GM12878 (cell line): ENCODE measurements at regions of chr6 and their contacts with region 1.

Region 1: GRCh38 chr6:12060780-12061619 is 48.9 kb downstream of the HIVEP1 start:
- DNase-seq: peak; percentile 87
- ATAC-seq: peak; percentile 82
- H3K4me3 ChIP-seq: peak overlapping the region; percentile 57; the same call in 1 of the 2 replicates
- H3K27ac ChIP-seq: peak overlapping the region; percentile 85
- H3K4me1 ChIP-seq: peaks cover 44% of the 10 kb centered on the region
- H3K27me3 ChIP-seq: no peaks in the 10 kb centered on the region
- CTCF ChIP-seq: no peak
- EP300 ChIP-seq: peak; percentile 94
- POLR2A ChIP-seq: peak; percentile 70
- RAD21 ChIP-seq: no peak

Region 2: DNA sequence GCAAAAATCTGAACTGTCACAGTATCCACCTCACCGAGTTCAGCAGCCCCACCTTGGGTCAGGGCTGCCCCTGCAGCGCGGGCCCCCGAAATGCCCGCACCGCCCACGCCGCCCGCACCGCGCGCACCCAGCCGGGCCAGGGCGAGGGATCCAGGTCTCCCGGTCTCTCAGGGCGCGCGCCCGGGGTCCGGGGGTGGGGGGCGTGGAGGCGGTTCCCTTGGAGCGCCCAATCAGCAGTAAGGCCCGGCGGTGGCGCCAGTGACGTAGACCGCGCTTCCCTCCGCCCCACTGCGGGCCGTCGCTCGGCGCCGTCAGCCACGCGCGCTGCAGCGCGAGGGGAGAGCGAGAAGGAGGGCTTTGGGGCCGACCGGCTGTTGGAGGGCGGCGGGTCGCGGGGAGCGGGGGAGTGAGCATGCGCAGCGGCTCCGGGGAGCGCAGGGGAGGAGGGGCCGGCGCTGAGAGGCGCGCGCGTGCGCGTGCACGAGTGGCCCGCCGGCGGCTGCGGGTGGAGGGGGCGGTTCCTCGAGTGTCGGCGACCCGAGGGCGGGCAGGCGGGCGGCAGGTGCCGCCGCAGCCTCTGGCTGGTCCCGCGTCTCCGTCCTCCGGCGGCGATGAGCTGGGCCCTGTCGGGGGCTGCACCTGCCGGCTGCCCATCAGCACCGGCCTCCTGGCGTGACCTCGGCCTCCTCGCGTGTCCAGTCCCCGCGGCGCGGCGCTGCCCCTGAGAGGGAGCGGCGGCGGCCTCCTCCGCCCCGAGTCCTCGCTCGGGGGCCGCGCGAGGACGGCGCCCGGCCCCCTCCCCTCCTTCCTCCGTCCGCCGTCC is 523.6 kb before region 1 on chr6 and contains the start of gene TMEM170B:
- CTCF ChIA-PET with region 1: no interaction called
- POLR2A ChIA-PET with region 1: no interaction called
- RAD21 ChIA-PET with region 1: no interaction called
- SMC1A ChIA-PET with region 1: no interaction called
- in situ Hi-C with region 1: no loop called
- intact Hi-C with region 1: no loop called
- DNase-seq: peak; percentile 82
- ATAC-seq: peak; percentile 98
- H3K4me3 ChIP-seq: peak within 1 kb of the TSS; percentile 96
- H3K27ac ChIP-seq: peak within 1 kb of the TSS; percentile 69
- H3K4me1 ChIP-seq: no peaks in the 10 kb centered on the region; the same call in 1 of the 2 replicates
- H3K27me3 ChIP-seq: no peaks in the 10 kb centered on the region
- CTCF ChIP-seq: no peak
- EP300 ChIP-seq: 0 out of 4 replicates have a peak, but pooled peaks of 1 of the 2 experiments have one; percentile 5
- POLR2A ChIP-seq: peak; percentile 78
- RAD21 ChIP-seq: no peak
- polyA plus RNA-seq, gene TMEM170B: 1.6 to 1.8 TPM

Region 3: DNA sequence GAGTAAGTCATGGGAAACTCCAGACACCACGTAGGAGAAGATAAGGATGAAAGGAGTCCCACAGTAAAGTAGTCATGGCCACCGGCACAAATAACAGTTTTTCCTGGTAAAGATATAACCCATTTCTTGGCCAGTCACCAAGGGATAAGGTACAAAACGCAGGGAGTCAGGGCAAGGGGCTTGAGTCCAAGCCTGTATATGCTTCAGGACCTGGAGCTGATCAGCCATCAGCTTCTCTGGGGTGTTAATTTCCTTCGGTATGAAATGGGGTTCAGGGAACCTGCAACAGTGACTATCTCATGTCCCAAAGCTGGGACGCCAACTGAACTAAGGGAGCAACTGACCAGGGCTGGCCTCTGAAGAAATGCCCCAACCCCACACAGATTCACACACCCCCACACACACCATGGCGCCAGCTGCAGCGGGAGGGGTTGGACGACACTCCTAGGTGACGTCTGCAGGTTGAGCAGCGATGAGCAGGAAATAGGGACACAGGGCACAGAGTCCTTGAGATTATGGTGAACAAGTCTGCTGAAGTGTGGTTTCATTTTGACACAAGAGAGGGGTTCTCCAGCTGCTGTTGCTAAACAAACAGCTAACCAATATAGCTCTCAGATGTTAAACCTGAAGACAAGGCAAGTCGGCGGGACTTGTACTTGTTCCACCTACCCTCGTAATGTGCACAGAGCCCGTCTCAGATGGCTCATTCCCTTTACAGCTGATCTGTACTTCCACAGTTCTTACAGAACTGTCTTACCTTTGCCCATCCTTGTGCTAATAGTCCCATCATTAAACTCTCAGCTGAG is 275.0 kb before region 1 on chr6:
- CTCF ChIA-PET with region 1: no interaction called
- POLR2A ChIA-PET with region 1: interaction called, 6 read pairs
- RAD21 ChIA-PET with region 1: interaction called, 8 read pairs
- SMC1A ChIA-PET with region 1: interaction called, 10 read pairs
- in situ Hi-C with region 1: no loop called
- intact Hi-C with region 1: no loop called
- DNase-seq: peak; percentile 93
- ATAC-seq: peak; percentile 93
- H3K4me3 ChIP-seq: peak overlapping the region; percentile 46
- H3K27ac ChIP-seq: peak overlapping the region; percentile 89
- H3K4me1 ChIP-seq: peaks cover 25% of the 10 kb centered on the region
- H3K27me3 ChIP-seq: no peaks in the 10 kb centered on the region
- CTCF ChIP-seq: no peak
- EP300 ChIP-seq: peak; percentile 83 to 92
- POLR2A ChIP-seq: peak; percentile 66
- RAD21 ChIP-seq: peak; percentile 27; the same call in 1 of the 2 replicates

Region 4: GRCh38 chr6:12075067-12075563 is 14.1 kb after region 1 on chr6:
- CTCF ChIA-PET with region 1: interaction called, 15 read pairs
- POLR2A ChIA-PET with region 1: interaction called, 5 read pairs
- RAD21 ChIA-PET with region 1: interaction called, 9 read pairs
- SMC1A ChIA-PET with region 1: interaction called, 19 read pairs
- in situ Hi-C with region 1: no loop called
- intact Hi-C with region 1: no loop called
- DNase-seq: no peak
- ATAC-seq: peak; percentile 63
- H3K4me3 ChIP-seq: no peak overlapping the region
- H3K27ac ChIP-seq: no peak overlapping the region
- H3K4me1 ChIP-seq: peaks cover 3% of the 10 kb centered on the region
- H3K27me3 ChIP-seq: no peaks in the 10 kb centered on the region
- CTCF ChIP-seq: peak; percentile 30 to 53 (median 40); a peak in 4 of 6 replicates
- EP300 ChIP-seq: no peak
- POLR2A ChIP-seq: no peak
- RAD21 ChIP-seq: peak; percentile 65

Region 5: GRCh38 chr6:12090714-12091113 is 29.7 kb after region 1 on chr6:
- CTCF ChIA-PET with region 1: interaction called, 3 read pairs
- POLR2A ChIA-PET with region 1: interaction called, 4 read pairs
- RAD21 ChIA-PET with region 1: interaction called, 5 read pairs
- SMC1A ChIA-PET with region 1: interaction called, 11 read pairs
- in situ Hi-C with region 1: no loop called
- intact Hi-C with region 1: no loop called
- DNase-seq: no peak
- ATAC-seq: peak; percentile 36; the same call in 2 of the 3 replicates
- H3K4me3 ChIP-seq: no peak overlapping the region
- H3K27ac ChIP-seq: no peak overlapping the region
- H3K4me1 ChIP-seq: no peaks in the 10 kb centered on the region
- H3K27me3 ChIP-seq: no peaks in the 10 kb centered on the region
- CTCF ChIP-seq: no peak
- EP300 ChIP-seq: no peak
- POLR2A ChIP-seq: no peak
- RAD21 ChIP-seq: no peak

Region 6: GRCh38 chr6:12113190-12113577 is 52.2 kb after region 1 on chr6:
- CTCF ChIA-PET with region 1: interaction called, 7 read pairs
- POLR2A ChIA-PET with region 1: interaction called, 6 read pairs
- RAD21 ChIA-PET with region 1: interaction called, 32 read pairs
- SMC1A ChIA-PET with region 1: interaction called, 56 read pairs
- in situ Hi-C with region 1: no loop called
- intact Hi-C with region 1: loop called (anchors 5 kb)
- DNase-seq: no peak
- ATAC-seq: peak; percentile 60
- H3K4me3 ChIP-seq: peak overlapping the region; percentile 32; the same call in 1 of the 2 replicates
- H3K27ac ChIP-seq: peak overlapping the region; percentile 88
- H3K4me1 ChIP-seq: peaks cover 49% of the 10 kb centered on the region
- H3K27me3 ChIP-seq: no peaks in the 10 kb centered on the region
- CTCF ChIP-seq: no peak
- EP300 ChIP-seq: no peak
- POLR2A ChIP-seq: peak; percentile 41; the same call in 1 of the 2 replicates
- RAD21 ChIP-seq: no peak

Region 7: GRCh38 chr6:12354499-12354898 is 293.5 kb after region 1 on chr6:
- CTCF ChIA-PET with region 1: no interaction called
- POLR2A ChIA-PET with region 1: interaction called, 5 read pairs
- RAD21 ChIA-PET with region 1: interaction called, 4 read pairs
- SMC1A ChIA-PET with region 1: no interaction called
- in situ Hi-C with region 1: no loop called
- intact Hi-C with region 1: loop called (anchors 5 kb)
- DNase-seq: peak; percentile 91
- ATAC-seq: peak; percentile 77
- H3K4me3 ChIP-seq: no peak overlapping the region
- H3K27ac ChIP-seq: peak overlapping the region; percentile 56
- H3K4me1 ChIP-seq: peaks cover 47% of the 10 kb centered on the region
- H3K27me3 ChIP-seq: no peaks in the 10 kb centered on the region
- CTCF ChIP-seq: no peak
- EP300 ChIP-seq: peak; percentile 43 to 56; a peak in 2 of 4 replicates
- POLR2A ChIP-seq: no peak
- RAD21 ChIP-seq: no peak

Region 8: DNA sequence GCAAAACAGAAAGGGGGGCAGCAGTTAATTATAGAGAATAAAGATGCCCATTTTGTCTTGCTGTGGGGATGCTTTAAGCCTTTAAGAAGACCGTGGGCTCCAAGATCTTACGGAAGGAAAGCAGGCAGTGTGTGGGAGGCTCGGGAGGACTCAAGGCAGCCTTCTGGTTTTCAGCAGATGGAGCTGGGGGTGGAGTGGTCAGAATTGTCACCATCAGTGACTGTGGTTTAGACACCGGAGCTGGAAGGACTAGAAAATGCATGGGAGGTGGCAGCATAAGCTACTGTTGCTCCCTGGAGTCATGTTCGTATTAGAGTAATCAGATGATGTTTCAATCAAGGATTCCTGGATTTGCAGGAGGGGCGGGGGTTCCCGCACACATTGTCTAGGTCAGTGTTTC is 659.3 kb after region 1 on chr6:
- CTCF ChIA-PET with region 1: no interaction called
- POLR2A ChIA-PET with region 1: no interaction called
- RAD21 ChIA-PET with region 1: no interaction called
- SMC1A ChIA-PET with region 1: no interaction called
- in situ Hi-C with region 1: no loop called
- intact Hi-C with region 1: no loop called
- DNase-seq: no peak
- ATAC-seq: no peak
- H3K4me3 ChIP-seq: no peak overlapping the region
- H3K27ac ChIP-seq: no peak overlapping the region
- H3K4me1 ChIP-seq: no peaks in the 10 kb centered on the region
- H3K27me3 ChIP-seq: no peaks in the 10 kb centered on the region; a peak in 2 of 4 replicates
- CTCF ChIP-seq: no peak
- EP300 ChIP-seq: no peak
- POLR2A ChIP-seq: no peak
- RAD21 ChIP-seq: no peak